HepG2 (cell line): ENCODE measurements at regions of chr11 and their contacts with region 1.

Region 1: GRCh38 chr11:125923012-125923579 is 18.8 kb downstream of the DDX25 start:
- DNase-seq: peak; percentile 77
- ATAC-seq: peak; percentile 57
- H3K4me3 ChIP-seq: no peak overlapping the region
- H3K27ac ChIP-seq: no peak overlapping the region
- H3K4me1 ChIP-seq: peaks cover 67% of the 10 kb centered on the region
- H3K27me3 ChIP-seq: no peaks in the 10 kb centered on the region
- CTCF ChIP-seq: peak; percentile 86
- EP300 ChIP-seq: no peak
- POLR2A ChIP-seq: no peak
- RAD21 ChIP-seq: peak; percentile 84

Region 2: DNA sequence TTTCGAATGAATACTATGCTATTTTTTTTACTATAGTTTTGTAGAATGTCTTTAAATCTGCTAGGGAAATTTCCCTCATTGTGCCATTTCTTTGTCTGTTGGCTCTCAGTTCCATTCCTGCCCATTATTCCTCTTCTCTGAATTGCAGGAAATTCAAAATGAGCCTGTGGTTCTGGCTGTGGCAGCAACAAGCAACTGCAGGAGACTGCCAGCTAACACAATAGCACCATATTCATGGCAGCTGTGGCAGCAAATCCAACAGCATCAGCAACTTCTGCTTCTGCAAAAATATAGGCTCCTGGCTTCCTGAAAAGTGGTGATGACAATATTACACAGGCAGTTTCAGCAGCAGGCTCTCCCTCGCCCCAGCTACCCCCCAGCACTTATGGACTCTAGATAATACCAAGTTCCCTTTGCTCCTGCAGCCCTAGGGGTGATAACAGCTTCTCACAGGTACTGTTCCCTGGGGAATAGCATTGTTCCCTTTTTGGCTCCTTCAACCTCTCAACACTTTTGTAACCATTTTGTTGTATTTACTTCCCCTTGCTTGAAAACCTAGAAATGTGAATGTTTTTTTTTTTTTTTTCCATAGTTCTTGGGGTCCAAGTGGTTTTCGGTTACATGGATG is 80.7 kb before region 1 on chr11:
- CTCF ChIA-PET with region 1: no interaction called
- POLR2A ChIA-PET with region 1: no interaction called
- in situ Hi-C with region 1: no loop called
- intact Hi-C with region 1: no loop called
- DNase-seq: no peak
- ATAC-seq: no peak
- H3K4me3 ChIP-seq: no peak overlapping the region
- H3K27ac ChIP-seq: no peak overlapping the region
- H3K4me1 ChIP-seq: no peaks in the 10 kb centered on the region
- H3K27me3 ChIP-seq: peaks cover 0 to 4% of the 10 kb centered on the region in 2 experiments; a peak in 1 of 5 replicates
- CTCF ChIP-seq: no peak
- EP300 ChIP-seq: no peak
- POLR2A ChIP-seq: no peak
- RAD21 ChIP-seq: no peak

Region 3: DNA sequence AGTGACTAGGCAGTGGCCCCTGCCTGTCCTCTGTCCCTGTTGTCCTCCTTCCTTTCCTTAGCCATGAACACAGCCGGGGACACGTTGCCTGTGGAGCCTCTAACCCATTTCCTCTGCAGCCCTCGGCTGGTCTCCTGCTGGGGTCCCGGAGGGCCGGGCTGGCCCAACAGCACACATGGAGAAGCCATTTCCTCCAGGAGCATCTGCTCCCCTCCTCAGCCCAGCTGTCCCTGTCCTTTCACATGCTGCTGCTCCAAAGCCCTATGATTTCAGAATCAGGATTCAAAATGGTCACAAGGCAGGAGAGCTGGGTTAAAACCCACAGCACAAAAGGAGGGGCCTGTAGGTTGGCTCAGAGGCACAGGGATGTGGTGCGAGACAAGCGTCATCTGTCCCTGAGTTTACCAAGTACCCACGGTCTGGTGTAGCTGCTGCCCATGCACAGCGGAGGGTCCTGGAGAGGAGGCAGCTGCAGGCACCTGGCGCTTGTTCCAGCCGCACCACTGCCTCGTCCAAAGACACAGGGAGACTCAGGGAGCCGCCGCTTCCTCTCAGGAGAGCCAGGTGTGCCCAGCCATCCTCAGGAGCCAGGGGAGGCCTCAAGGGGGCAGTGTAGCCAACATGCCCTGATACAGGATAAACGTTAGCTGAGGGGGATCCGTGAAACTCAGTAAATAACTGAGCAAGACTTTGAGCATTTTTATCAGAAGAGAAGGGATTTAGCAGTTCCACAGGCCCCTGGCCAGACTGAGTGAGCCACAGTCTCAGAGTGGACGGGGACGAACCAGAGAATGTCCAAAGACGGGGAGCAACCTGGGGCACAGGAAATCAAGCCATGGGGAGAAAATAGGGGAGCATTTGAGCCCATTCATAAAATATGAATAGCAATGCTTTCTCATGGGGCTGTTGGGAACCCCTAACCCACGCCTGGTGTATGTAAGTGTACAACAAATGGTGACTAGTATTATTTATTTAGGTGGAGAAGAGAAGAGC is 18.8 kb after region 1 on chr11:
- CTCF ChIA-PET with region 1: no interaction called
- POLR2A ChIA-PET with region 1: no interaction called
- in situ Hi-C with region 1: no loop called
- intact Hi-C with region 1: loop called (anchors 2 kb)
- DNase-seq: peak; percentile 60
- ATAC-seq: peak; percentile 93
- H3K4me3 ChIP-seq: peak overlapping the region; percentile 36 to 64 (median 37)
- H3K27ac ChIP-seq: no peak overlapping the region
- H3K4me1 ChIP-seq: peaks cover 43% of the 10 kb centered on the region
- H3K27me3 ChIP-seq: peaks cover 0 to 3% of the 10 kb centered on the region in 2 experiments; a peak in 1 of 5 replicates
- CTCF ChIP-seq: peak; percentile 93
- EP300 ChIP-seq: no peak
- POLR2A ChIP-seq: no peak
- RAD21 ChIP-seq: peak; percentile 39; the same call in 1 of the 2 replicates

Region 4: DNA sequence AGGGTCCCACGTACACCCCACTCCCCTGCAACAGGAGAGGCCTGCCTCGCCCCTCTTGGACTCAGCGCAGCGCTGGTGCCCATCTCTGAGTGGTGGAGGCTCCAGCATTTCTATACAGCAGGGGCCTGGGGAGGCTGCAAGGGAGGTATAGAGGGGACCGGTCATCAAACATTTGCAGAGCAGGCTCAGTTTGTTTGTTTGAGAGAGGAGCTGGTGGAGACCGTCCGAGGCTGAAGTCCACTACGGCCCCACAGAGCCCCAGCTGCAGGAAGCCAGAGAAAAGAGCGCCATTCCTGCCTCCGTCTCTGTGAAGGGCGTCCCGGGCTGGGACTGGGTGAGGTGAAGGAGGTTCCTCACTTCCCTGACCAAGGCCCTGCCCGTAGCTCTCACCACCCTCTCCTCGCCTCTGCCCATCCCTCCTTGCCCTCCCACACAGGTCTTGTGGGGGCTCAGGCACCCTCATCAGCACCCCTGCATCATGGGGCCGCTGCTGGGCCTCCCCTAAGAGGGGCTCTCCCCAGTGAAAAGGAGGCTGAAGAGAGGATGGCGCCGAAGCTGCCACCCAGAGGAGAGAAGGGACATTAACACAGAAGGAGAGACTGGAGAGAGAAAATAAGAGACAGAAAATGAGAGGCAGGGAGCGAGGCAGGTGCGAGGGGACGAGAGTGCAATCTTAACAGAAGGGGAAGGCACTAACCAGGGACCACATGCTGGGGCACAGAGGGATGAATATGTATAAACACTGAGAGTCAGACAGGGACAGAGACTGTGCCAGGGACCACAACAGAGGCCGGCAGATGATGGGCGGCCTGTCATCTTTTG is 263.8 kb after region 1 on chr11:
- CTCF ChIA-PET with region 1: interaction called, 3 read pairs
- POLR2A ChIA-PET with region 1: interaction called, 8 read pairs
- in situ Hi-C with region 1: loop called (anchors 5 kb)
- intact Hi-C with region 1: no loop called
- DNase-seq: peak; percentile 87
- ATAC-seq: peak; percentile 82
- H3K4me3 ChIP-seq: peak overlapping the region; percentile 25 to 60 (median 37); a peak in 4 of 6 replicates
- H3K27ac ChIP-seq: peak overlapping the region; percentile 94
- H3K4me1 ChIP-seq: peaks cover 96% of the 10 kb centered on the region
- H3K27me3 ChIP-seq: no peaks in the 10 kb centered on the region
- CTCF ChIP-seq: peak; percentile 52
- EP300 ChIP-seq: peak in 1 of 2 experiments; percentile 74; a peak in 2 of 4 replicates
- POLR2A ChIP-seq: peak in 1 of 2 experiments; percentile 59; a peak in 2 of 4 replicates
- RAD21 ChIP-seq: peak; percentile 63

Region 5: GRCh38 chr11:126194121-126194543 is 271.0 kb after region 1 on chr11:
- CTCF ChIA-PET with region 1: interaction called, 24 read pairs
- POLR2A ChIA-PET with region 1: interaction called, 8 read pairs
- in situ Hi-C with region 1: loop called (anchors 5 kb)
- intact Hi-C with region 1: loop called (anchors 1 kb)
- DNase-seq: peak; percentile 44
- ATAC-seq: no peak
- H3K4me3 ChIP-seq: no peak overlapping the region
- H3K27ac ChIP-seq: peak overlapping the region; percentile 52
- H3K4me1 ChIP-seq: peaks cover 51% of the 10 kb centered on the region
- H3K27me3 ChIP-seq: no peaks in the 10 kb centered on the region
- CTCF ChIP-seq: peak; percentile 79
- EP300 ChIP-seq: no peak
- POLR2A ChIP-seq: no peak
- RAD21 ChIP-seq: peak; percentile 88